Dorsolateral prefrontal cortex (tissue), 120 donors: ENCODE measurements at regions of chr9 and their contacts with region 1.

Region 1: GRCh38 chr9:131530920-131531832 is at the start of gene UCK1:
- DNase-seq: peak; percentile 53 to 77 (median 68)
- H3K4me3 ChIP-seq: peak within 1 kb of the TSS; percentile 70 to 99 (median 92)
- H3K27ac ChIP-seq: peak within 1 kb of the TSS in 58 of 59 donors; percentile 47 to 97 (median 88)
- H3K27me3 ChIP-seq: no peaks in the 10 kb centered on the region
- CTCF ChIP-seq: peak in 33 of 56 donors; percentile 6 to 60 (median 33)
- total RNA-seq, gene UCK1: 29.3 to 64.4 (median 39.2) TPM

Region 2: DNA sequence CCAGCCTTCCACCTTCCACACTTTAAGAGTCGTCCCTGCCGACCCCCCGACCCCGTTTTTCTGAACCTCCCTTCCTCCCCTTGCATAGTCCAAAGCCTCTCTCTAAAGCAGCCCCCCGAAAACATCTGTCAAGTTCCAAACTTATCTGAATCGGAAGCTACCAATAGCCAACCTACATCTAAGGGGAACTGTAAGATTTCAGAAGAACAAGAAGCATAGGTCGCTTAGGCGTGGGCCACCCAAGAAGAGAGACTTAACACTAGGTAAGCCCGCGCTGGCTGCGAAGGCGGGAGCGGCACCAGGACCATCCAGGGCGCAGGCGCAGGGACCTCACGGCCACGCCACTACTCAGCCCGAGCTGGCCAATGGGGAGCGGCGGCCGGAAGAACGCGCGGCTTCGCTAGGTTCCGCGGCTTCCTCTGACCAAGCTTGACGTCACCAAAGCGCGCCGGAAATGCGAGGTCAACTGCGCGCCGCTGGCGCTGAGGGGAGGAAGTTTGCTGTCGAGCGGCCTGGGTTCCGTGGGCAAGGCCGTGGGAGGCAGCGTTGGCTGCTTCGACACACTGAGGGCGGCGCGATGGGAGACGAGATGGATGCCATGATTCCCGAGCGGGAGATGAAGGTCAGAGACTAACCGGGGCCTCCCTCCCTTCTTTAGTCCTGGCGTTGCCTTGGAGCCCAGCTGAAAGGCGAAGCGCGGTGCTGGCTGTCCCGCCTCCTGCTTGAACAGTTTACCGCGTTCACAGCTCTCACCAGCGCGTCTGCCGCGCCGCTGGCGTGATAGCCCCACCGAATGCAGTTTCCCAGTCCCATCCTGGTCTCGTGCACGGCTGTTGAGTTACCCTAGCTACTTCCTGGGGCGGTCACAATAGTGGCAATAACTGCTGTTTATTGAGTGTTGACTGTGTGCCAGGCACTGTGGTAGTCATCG is 405.8 kb before region 1 on chr9 and contains the start of gene NUP214:
- intact Hi-C with region 1: loop called in 1 of 2 experiments (anchors 10 kb)
- DNase-seq: peak; percentile 98 to 100 (median 99)
- H3K4me3 ChIP-seq: peak within 1 kb of the TSS; percentile 63 to 100 (median 96)
- H3K27ac ChIP-seq: peak within 1 kb of the TSS in 58 of 59 donors; percentile 17 to 94 (median 81)
- H3K27me3 ChIP-seq: no peaks in the 10 kb centered on the region
- CTCF ChIP-seq: peak in 33 of 56 donors; percentile 5 to 60 (median 35)
- total RNA-seq, gene NUP214: 37.9 to 85.0 (median 52.8) TPM

Region 3: DNA sequence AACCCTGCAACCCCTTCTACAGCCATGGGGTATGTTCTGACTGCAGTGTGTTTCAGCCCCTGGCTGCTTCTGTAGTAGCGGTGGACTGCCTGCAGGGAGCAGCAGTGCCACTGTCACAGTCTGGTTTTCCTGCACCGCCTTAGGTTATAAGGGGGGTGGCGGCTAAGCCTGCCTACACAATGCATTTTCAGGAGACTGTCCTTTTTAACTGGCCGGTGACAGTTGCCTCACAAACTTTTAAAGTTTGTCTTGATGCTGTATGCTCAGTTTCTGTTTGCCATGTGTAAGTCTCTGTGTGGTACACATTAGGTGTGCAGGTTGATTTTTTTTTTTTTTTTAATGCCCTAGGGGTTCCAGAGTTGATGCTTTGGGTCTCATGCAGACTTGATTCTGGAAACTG is 352.8 kb before region 1 on chr9:
- intact Hi-C with region 1: no loop called
- DNase-seq: peak; percentile 47 to 78 (median 68)
- H3K4me3 ChIP-seq: no peak overlapping the region
- H3K27ac ChIP-seq: no peak overlapping the region
- H3K27me3 ChIP-seq: no peaks in the 10 kb centered on the region
- CTCF ChIP-seq: peak; percentile 67 to 99 (median 94)

Region 4: GRCh38 chr9:131366761-131367401 is 164.3 kb before region 1 on chr9:
- intact Hi-C with region 1: loop called in 1 of 2 experiments (anchors 2 kb)
- DNase-seq: peak in 2 of 10 donors; percentile 35 to 46
- H3K4me3 ChIP-seq: no peak overlapping the region
- H3K27ac ChIP-seq: no peak overlapping the region
- H3K27me3 ChIP-seq: no peaks in the 10 kb centered on the region
- CTCF ChIP-seq: peak in 45 of 56 donors; percentile 12 to 67 (median 39)

Region 5: DNA sequence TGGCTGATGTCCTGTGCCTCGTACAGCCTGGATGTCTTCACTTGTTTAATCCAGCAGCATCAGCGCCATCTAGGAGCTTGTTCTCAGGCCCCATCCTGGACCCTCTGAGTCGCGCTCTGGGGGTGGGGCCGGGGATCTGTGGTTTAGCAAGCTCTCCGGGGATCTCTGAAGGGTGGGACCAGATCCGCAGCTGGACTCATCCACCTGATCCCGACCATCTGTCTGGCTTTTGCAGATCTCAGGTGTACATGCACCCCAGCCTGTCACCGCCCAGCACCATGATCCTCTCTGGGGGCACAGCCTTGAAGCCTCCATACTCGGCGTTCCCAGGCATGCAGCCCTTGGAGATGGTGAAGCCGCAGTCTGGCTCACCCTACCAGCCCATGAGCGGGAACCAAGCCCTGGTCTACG is 43.5 kb before region 1 on chr9:
- intact Hi-C with region 1: no loop called
- DNase-seq: no peak
- H3K4me3 ChIP-seq: no peak overlapping the region
- H3K27ac ChIP-seq: peak overlapping the region in 10 of 59 donors; percentile 2 to 44 (median 22)
- H3K27me3 ChIP-seq: no peaks in the 10 kb centered on the region
- CTCF ChIP-seq: no peak

Region 6: GRCh38 chr9:131502781-131503625 is 28.2 kb before region 1 on chr9 and contains the start of gene POMT1:
- intact Hi-C with region 1: loop called in 1 of 2 experiments (anchors 2 kb)
- DNase-seq: peak; percentile 74 to 95 (median 84)
- H3K4me3 ChIP-seq: peak within 1 kb of the TSS; percentile 53 to 99 (median 94)
- H3K27ac ChIP-seq: peak within 1 kb of the TSS in 56 of 59 donors; percentile 8 to 92 (median 74)
- H3K27me3 ChIP-seq: no peaks in the 10 kb centered on the region
- CTCF ChIP-seq: peak in 38 of 56 donors; percentile 9 to 65 (median 30)
- total RNA-seq, gene POMT1: 34.7 to 106 (median 58.6) TPM

Region 7: DNA sequence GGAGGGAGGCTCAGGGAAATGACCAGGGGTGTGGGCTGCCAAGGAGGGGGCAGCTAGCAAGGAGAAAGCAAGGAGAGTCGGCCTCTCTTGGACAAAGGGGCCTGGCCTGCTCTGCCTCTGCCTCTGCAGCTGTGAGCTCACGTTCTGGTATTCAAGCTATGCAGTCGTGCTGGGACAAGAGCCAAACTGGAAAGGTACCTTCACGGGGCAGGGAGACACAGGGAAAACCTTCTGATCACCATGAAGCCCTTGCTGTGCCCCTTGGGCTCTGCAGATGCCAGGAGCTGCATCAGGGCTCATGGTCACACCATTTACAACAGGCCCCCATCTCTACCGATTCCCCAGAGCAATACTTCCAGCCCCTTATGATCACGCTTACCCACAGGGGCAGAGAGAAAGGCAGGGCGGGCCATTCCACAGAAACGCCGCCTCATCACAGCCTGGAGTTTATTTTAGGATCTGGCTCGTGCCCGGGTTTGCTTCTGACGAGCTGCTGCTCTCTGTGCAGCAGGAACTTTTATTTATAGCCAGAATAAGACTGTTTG is 77.4 kb after region 1 on chr9:
- intact Hi-C with region 1: loop called in 1 of 2 experiments (anchors 10 kb)
- DNase-seq: peak in 8 of 10 donors; percentile 64 to 81 (median 74)
- H3K4me3 ChIP-seq: peak overlapping the region in 6 of 59 donors; percentile 1 to 30 (median 12)
- H3K27ac ChIP-seq: peak overlapping the region in 55 of 59 donors; percentile 3 to 88 (median 69)
- H3K27me3 ChIP-seq: no peaks in the 10 kb centered on the region
- CTCF ChIP-seq: no peak